B cell (primary cell): ENCODE measurements at regions of chrX and their contacts with region 1.

Region 1: DNA sequence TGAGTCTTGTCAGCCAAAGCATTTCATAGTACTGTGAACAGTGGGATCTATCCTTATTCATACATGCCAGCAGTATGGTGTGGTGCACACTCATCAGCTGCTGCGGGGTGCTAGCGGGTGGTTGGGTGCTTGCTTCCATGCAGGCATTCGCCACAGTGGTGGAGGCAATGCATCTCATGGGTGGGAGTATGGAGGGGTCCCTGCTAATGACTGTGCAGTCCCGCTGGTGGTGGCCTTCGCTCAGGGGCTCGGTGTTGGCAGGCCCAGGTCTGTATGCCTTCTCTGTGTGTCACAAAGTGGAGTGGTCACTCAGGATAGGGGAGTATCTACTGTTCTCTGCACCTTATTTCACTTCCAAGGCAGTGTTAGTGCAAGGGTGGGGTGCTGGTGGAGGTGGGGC is 122.6 kb downstream of the POU3F4 start:
- DNase-seq: no peak
- ATAC-seq: no peak
- H3K4me3 ChIP-seq: no peak overlapping the region
- H3K4me3 Mint-ChIP-seq: no peak overlapping the region
- H3K27ac ChIP-seq: no peak overlapping the region
- H3K27ac Mint-ChIP-seq: no peak overlapping the region
- H3K4me1 ChIP-seq: peaks cover 8% of the 10 kb centered on the region in 2 donors
- H3K4me1 Mint-ChIP-seq: peaks cover 10% of the 10 kb centered on the region
- H3K27me3 ChIP-seq: no peaks in the 10 kb centered on the region
- H3K27me3 Mint-ChIP-seq: no peaks in the 10 kb centered on the region
- CTCF ChIP-seq: no peak

Region 2: GRCh38 chrX:83469551-83469950 is 161.1 kb before region 1 on chrX:
- CTCF ChIA-PET with region 1: interaction called, 4 read pairs
- POLR2A ChIA-PET with region 1: no interaction called
- intact Hi-C with region 1: loop called (anchors 2 kb)
- DNase-seq: peak; percentile 9
- ATAC-seq: peak; percentile 24
- H3K4me3 ChIP-seq: no peak overlapping the region
- H3K4me3 Mint-ChIP-seq: no peak overlapping the region
- H3K27ac ChIP-seq: no peak overlapping the region
- H3K27ac Mint-ChIP-seq: no peak overlapping the region
- H3K4me1 ChIP-seq: no peaks in the 10 kb centered on the region
- H3K4me1 Mint-ChIP-seq: no peaks in the 10 kb centered on the region
- H3K27me3 ChIP-seq: no peaks in the 10 kb centered on the region
- H3K27me3 Mint-ChIP-seq: no peaks in the 10 kb centered on the region
- CTCF ChIP-seq: peak; percentile 12